GM18951 (cell line): ENCODE measurements at regions of chr17 and their contacts with region 1.

Region 1: GRCh38 chr17:19992803-19993713 is 15.4 kb upstream of the AKAP10 start:
- POLR2A ChIP-seq: no peak

Region 2: DNA sequence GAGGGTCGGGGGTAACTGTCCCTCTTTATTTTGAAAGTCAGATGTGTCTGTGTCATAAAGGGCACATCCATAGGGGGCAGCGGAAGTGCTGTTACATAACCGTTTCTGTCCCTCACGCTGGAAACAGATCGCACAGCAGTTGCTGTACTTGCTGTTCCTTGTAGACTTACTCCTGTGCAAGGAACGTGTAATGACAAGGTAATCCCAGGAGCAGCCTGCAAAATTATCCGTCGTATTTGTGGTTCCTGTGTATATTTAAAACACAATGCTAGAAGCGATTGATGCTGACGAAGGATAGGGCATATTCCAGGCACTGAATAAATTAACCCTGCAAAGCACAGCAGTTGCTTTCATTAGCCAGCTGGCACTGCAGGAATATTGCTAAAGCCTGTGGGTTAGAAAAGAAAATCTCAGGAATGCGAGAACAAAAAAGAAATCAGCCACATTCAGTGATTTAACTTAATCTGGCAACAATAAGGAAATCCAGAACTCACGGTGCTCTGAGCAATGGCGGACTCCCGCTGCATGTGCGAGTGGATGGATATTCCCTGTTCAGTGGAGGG is 92.3 kb after region 1 on chr17:
- in situ Hi-C with region 1: no loop called
- POLR2A ChIP-seq: no peak

Region 3: GRCh38 chr17:20116683-20117309 is 123.7 kb after region 1 on chr17:
- in situ Hi-C with region 1: loop called (anchors 5 kb)
- POLR2A ChIP-seq: no peak

Region 4: DNA sequence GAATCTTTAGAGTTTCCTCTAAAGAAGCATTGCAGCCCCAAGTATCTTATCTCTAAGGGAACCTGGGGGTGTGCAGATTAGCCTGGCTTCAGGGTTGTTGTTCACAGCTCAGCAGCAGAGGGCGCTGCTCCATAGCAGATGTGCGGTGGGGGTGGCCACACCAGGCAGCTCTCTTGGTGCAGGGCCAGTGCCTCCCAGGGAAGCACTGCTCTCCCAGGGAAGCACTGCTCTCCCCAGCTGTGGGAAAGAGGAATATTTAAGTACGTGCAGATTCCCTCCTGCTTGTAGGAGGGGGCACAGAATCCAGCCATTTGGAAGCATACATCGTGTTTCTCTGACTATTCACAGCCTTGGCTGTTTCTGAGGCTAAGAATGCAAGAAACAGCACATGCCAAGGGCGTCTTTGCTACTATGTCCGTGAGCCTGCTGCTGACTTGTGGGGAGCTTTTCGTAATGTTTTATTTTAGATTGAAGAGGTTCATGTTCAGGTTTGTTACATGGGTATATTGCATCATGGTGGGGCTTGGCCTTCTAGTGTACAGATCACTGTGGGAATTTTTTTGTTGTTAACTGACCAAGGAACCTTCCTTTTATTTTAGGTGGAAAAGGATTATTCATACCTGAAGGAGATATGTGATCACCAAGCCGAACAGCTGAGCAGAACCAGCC is 233.9 kb after region 1 on chr17:
- in situ Hi-C with region 1: loop called (anchors 5 kb)
- POLR2A ChIP-seq: no peak

Region 5: DNA sequence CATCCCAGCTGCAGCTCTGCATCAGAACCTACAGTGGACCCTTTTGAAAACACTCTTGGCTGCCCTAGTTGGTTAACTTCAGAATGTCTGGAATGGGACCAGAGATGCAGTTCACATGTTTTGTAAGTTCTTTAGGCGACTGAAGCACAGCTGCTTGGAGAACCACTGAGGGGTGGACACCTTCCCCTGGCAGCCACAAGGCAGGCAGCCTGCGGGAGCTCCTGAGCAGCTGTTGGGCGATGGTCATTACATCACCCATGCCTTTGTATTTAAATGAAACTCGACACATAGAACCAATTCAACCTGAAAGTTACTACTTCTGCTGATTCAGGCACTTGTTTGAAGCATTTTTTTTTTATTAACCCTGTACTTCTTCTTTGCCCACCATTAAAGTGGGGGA is 322.8 kb after region 1 on chr17:
- in situ Hi-C with region 1: loop called (anchors 10 kb)
- POLR2A ChIP-seq: no peak